ENCODE measurements at regions of chr9 and their contacts with region 1.

Region 1: GRCh38 chr9:99184475-99185347 is 37.0 kb downstream of the ALG2 start:
- H3K4me3 ChIP-seq: no peak overlapping the region
- H3K27ac ChIP-seq: no peak overlapping the region
- H3K4me1 ChIP-seq: no peaks in the 10 kb centered on the region
- CTCF ChIP-seq: peak; percentile 28; the same call in 1 of the 2 replicates

Region 2: DNA sequence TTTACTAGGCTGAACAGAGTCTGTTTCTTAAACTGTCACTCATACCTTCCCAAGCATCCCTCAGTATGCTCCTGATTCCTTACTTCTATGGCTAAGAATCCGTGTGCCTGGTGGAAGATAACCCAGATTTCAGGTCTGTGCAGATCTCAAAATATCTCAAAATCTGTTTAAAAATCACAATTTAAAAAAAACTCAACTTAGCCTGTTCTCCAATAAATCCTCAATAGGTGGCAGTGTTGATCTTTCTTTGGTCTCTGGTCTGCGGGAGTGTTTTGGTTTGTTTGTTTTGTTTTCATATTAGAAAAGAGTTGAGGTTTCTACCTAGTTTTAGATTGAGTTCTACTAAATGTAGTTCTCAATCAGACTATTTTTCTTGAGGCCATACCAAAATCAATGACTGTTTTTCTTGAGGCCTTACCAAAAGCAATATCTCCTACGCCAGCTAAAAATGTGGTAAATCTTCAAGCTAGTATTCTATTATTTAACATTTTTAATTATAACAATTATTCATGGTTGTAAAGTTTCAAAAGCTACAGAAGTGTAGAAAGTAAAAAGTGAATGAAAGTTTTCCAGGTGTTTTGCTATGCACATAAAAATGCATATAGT is 21.8 kb before region 1 on chr9:
- CTCF ChIA-PET with region 1: interaction called, 45 read pairs
- POLR2A ChIA-PET with region 1: no interaction called
- H3K4me3 ChIP-seq: no peak overlapping the region
- H3K27ac ChIP-seq: no peak overlapping the region
- H3K4me1 ChIP-seq: no peaks in the 10 kb centered on the region
- CTCF ChIP-seq: peak; percentile 30; the same call in 1 of the 2 replicates

Region 3: GRCh38 chr9:99173570-99174504 is 10.9 kb before region 1 on chr9:
- CTCF ChIA-PET with region 1: interaction called, 27 read pairs
- POLR2A ChIA-PET with region 1: no interaction called
- H3K4me3 ChIP-seq: no peak overlapping the region
- H3K27ac ChIP-seq: no peak overlapping the region
- H3K4me1 ChIP-seq: no peaks in the 10 kb centered on the region; the same call in 1 of the 2 replicates
- CTCF ChIP-seq: no peak

Region 4: DNA sequence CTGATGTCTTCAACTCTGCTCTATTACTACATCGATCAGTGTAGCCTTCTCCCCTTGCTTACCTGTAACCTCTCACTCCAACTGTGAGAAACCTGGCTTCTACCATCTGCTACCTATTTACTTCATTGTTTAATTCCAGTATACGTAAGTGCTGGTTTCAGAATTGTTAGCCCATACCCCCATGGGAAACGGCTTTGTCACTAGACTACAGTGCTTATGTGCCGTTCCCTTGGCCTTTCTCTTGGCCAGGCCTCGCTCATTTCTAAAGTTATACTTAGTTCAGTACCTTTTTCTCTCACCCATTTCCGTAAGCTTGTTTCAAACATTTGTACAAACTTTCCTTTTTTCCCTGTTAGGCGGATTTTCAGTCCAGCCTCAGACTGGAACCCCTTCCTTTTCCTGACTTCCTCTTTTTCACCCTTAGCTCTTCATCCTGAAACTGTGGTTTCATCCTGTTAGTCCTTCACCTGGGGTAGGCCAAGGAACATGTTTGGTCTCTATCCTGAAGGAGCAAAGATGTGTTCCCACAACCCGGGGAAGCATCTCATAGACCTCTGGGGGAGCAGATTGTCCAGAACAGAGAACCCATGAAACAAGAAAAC is 15.3 kb after region 1 on chr9:
- CTCF ChIA-PET with region 1: interaction called, 15 read pairs
- POLR2A ChIA-PET with region 1: no interaction called
- H3K4me3 ChIP-seq: no peak overlapping the region
- H3K27ac ChIP-seq: no peak overlapping the region
- H3K4me1 ChIP-seq: no peaks in the 10 kb centered on the region
- CTCF ChIP-seq: no peak

Region 5: DNA sequence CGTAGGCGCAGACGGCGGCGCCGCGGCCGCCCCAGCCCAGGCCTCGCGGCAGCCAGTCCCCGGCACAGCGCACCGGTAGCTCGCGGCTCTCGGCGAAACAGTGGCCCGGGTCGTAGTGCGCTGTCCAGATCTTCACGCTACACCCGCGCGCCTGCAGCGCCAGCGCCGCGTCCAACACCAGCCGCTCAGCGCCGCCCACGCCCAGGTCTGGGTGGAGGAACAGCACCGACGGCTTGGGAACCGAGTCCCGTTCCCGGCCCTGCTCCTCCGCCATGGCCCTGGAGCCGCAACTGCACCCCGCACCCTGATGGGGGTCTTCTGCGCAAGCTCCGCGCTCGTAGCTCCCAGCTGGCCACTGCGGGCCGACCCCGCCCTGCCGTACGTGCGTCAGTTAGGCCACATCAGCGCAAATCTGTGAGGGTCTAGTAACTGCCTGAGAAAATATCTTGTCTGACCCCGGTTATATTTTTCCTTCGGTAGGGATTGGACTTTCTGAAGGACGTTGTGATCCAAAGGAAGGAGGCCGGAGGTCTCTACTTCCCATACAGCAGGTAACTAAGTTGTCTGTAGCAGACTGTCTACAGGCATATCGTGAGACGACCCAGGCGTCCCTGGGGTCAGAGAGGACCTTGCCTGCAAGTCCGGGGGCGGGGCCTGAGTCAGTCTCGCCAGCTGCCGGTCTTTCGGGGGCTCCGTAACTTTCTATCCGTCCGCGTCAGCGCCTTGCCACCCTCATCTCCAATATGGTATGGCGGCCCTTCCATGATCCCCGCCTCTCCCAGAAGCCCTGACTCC is 37.1 kb after region 1 on chr9 and contains the starts of genes ALG2 and SEC61B:
- CTCF ChIA-PET with region 1: interaction called, 14 read pairs
- POLR2A ChIA-PET with region 1: interaction called, 5 read pairs
- H3K4me3 ChIP-seq: peak within 1 kb of the TSS; percentile 97
- H3K27ac ChIP-seq: peak within 1 kb of the TSS; percentile 92
- H3K4me1 ChIP-seq: peaks cover 3% of the 10 kb centered on the region
- CTCF ChIP-seq: no peak; the same call in 1 of the 2 replicates

Region 6: DNA sequence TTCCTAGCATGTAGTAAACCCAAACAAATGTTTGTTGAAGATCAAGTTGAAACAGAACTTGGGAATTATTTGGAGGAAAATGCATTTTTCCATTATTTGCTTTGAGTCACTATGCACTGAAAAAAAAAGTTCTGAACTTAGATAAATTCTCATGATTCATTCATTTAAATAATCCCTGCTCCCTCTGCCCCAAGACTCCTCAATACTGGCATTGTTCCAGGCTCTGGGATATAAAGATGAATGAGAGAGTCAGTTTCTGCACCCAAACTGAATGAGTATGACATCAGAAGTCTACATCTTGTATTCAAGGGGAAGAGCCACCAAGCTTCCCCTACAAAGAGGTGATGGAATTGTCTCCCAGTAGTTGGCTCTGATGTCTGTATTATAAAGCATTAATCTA is 161.2 kb after region 1 on chr9:
- CTCF ChIA-PET with region 1: no interaction called
- POLR2A ChIA-PET with region 1: no interaction called
- H3K4me3 ChIP-seq: no peak overlapping the region
- H3K27ac ChIP-seq: no peak overlapping the region
- H3K4me1 ChIP-seq: no peaks in the 10 kb centered on the region
- CTCF ChIP-seq: no peak